ENCODE measurements at regions of chr7 and their contacts with region 1.

Region 1: GRCh38 chr7:151705636-151706276 is 171.2 kb downstream of the PRKAG2 start:
- DNase-seq: no peak
- H3K4me3 ChIP-seq: peak overlapping the region; percentile 9 to 49
- H3K27ac ChIP-seq: no peak overlapping the region
- H3K4me1 ChIP-seq: peaks cover 0 to 14% of the 10 kb centered on the region in 2 donors
- H3K27me3 ChIP-seq: no peaks in the 10 kb centered on the region
- CTCF ChIP-seq: peak; percentile 23 to 68 (median 50)

Region 2: DNA sequence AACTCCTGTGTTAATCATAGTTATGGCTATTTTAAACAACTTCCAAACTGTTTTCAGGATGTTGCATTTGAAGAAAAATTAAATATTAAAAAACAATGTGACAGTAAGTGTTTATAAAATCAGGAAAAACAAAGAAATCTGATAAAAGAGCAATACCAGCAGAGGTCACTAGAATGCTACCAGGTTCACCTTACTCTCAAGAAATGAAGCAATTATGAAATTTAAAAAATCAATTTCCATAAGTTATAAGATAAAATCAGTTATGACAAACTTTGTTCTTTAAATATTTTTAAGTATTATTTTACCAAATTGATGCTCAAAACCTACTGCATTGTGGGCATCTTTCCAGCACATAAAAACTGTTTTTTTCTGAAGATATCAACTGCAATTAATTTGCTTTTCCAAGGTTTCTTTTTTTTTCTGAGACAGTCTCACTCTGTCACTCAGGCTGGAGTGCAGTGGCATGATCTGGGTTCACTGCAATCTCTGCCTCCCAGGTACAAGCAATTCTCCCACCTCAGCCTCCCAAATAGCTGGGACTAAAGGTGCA is 135.3 kb before region 1 on chr7:
- intact Hi-C with region 1: loop called (anchors 5 kb)
- DNase-seq: no peak
- H3K4me3 ChIP-seq: no peak overlapping the region
- H3K27ac ChIP-seq: no peak overlapping the region
- H3K4me1 ChIP-seq: no peaks in the 10 kb centered on the region
- H3K27me3 ChIP-seq: no peaks in the 10 kb centered on the region
- CTCF ChIP-seq: peak; percentile 29 to 47 (median 30)

Region 3: GRCh38 chr7:151626422-151627115 is 79.2 kb before region 1 on chr7:
- intact Hi-C with region 1: loop called (anchors 1 kb)
- DNase-seq: peak in 1 of 2 donors; percentile 63
- H3K4me3 ChIP-seq: no peak overlapping the region
- H3K27ac ChIP-seq: no peak overlapping the region
- H3K4me1 ChIP-seq: peaks cover 12 to 40% of the 10 kb centered on the region in 2 donors
- H3K27me3 ChIP-seq: no peaks in the 10 kb centered on the region
- CTCF ChIP-seq: peak; percentile 14 to 60 (median 50)

Measured in ascending aorta (tissue), 2 donors.